ENCODE measurements at regions of chr6 and their contacts with region 1.

Region 1: GRCh38 chr6:116047173-116047933 is 13.3 kb downstream of the FRK start:
- DNase-seq: peak; percentile 39
- H3K4me3 ChIP-seq: no peak overlapping the region
- H3K27ac ChIP-seq: no peak overlapping the region
- H3K4me1 ChIP-seq: peaks cover 10% of the 10 kb centered on the region
- CTCF ChIP-seq: no peak

Region 2: DNA sequence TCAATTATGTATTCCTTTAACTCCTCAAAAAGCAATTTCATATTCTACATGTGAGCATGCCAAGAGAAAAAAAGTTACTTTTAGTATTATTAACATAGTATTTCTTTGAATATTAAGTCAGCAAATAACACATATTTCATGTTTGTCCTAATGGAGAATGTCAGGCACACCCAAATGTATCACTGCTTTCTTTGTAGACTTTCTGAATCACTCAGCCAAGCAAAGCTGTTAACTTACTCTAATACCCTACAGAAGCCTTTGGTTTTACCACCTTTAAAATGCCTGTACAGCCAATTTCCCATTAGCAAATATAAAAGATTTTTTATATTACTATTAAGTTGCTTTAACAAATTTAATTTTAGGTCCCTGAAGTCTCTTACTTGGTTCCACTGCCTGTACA is 10.5 kb before region 1 on chr6:
- CTCF ChIA-PET with region 1: no interaction called
- POLR2A ChIA-PET with region 1: interaction called, 12 read pairs
- intact Hi-C with region 1: no loop called
- DNase-seq: no peak
- H3K4me3 ChIP-seq: no peak overlapping the region
- H3K27ac ChIP-seq: no peak overlapping the region
- H3K4me1 ChIP-seq: no peaks in the 10 kb centered on the region
- CTCF ChIP-seq: no peak

Region 3: GRCh38 chr6:116087437-116088027 is 40.2 kb after region 1 on chr6:
- CTCF ChIA-PET with region 1: no interaction called
- POLR2A ChIA-PET with region 1: interaction called, 11 read pairs
- intact Hi-C with region 1: no loop called
- DNase-seq: no peak
- H3K4me3 ChIP-seq: no peak overlapping the region
- H3K27ac ChIP-seq: no peak overlapping the region
- H3K4me1 ChIP-seq: peaks cover 6% of the 10 kb centered on the region
- CTCF ChIP-seq: no peak

Region 4: GRCh38 chr6:116165596-116165995 is 118.2 kb after region 1 on chr6:
- CTCF ChIA-PET with region 1: no interaction called
- POLR2A ChIA-PET with region 1: no interaction called
- intact Hi-C with region 1: no loop called
- DNase-seq: peak; percentile 25
- H3K4me3 ChIP-seq: no peak overlapping the region
- H3K27ac ChIP-seq: no peak overlapping the region
- H3K4me1 ChIP-seq: peaks cover 7% of the 10 kb centered on the region
- CTCF ChIP-seq: no peak